H1 (cell line): ENCODE measurements at regions of chr6 and their contacts with region 1.

Region 1: DNA sequence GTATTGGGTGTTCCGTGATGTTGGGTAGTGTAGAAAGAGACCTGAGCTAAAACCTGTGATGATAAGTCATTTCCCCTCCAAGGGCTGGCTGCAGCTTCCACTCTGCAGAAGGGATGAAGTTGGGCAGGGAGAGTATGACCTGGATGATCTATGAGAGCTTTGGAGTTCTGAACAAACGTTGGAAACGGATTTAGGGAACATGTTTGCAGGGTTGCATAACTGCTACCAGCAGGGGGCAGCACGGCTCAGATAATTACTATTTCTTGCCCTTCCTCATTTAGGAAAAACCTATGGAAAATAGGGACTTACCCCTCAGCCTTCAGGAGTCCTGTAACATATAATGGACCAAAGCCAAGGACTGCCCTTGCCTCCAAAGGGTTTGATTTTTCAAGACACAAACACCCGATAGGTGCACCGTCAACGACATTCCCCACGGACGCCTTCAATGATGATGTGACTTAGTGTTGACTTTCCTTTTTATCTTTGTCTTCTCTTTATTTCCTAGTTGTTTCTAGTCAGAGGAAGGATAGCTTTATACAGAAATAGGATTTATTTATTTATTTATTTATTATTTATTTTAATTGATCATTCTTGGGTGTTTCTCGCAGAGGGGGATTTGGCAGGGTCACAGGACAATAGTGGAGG is 164.9 kb upstream of the SASH1 start:
- DNase-seq: peak; percentile 50 to 89
- H3K4me3 ChIP-seq: no peak overlapping the region
- H3K27ac ChIP-seq: no peak overlapping the region
- H3K4me1 ChIP-seq: peaks cover 0 to 5% (median 2%) of the 10 kb centered on the region in 4 experiments; a peak in 3 of 7 replicates
- H3K27me3 ChIP-seq: no peaks in the 10 kb centered on the region
- CTCF ChIP-seq: peak; percentile 39 to 87 (median 71)
- EP300 ChIP-seq: no peak
- POLR2A ChIP-seq: no peak
- RAD21 ChIP-seq: peak; percentile 80 to 81

Region 2: GRCh38 chr6:148166339-148166968 is 11.3 kb before region 1 on chr6:
- CTCF ChIA-PET with region 1: interaction called, 20 read pairs
- POLR2A ChIA-PET with region 1: no interaction called
- DNase-seq: no peak
- H3K4me3 ChIP-seq: no peak overlapping the region
- H3K27ac ChIP-seq: no peak overlapping the region
- H3K4me1 ChIP-seq: no peaks in the 10 kb centered on the region; a peak in 1 of 7 replicates
- H3K27me3 ChIP-seq: no peaks in the 10 kb centered on the region
- CTCF ChIP-seq: peak in 2 of 3 experiments; percentile 40 to 56; a peak in 2 of 4 replicates
- EP300 ChIP-seq: no peak
- POLR2A ChIP-seq: no peak
- RAD21 ChIP-seq: peak; percentile 78 to 81

Region 3: DNA sequence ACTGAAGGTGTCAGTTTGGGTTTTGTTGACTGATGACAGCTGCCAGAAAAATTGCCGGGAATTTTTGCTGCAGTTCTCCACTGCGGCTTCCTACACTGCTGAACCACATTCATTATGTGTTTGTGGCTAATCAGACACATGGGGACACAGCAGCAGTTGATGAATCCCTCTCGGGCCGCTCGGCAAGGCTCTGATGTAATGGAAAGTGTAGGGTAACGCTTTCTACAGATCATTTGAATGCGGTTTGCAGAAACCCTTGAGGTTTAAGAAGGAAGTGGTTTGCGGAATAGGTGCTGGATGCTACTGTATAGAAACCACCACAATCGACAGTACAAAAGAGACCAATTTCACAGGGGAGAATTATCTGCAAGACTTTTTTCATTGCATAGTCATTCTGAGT is 26.3 kb after region 1 on chr6:
- CTCF ChIA-PET with region 1: interaction called, 11 read pairs
- POLR2A ChIA-PET with region 1: no interaction called
- DNase-seq: no peak
- H3K4me3 ChIP-seq: no peak overlapping the region
- H3K27ac ChIP-seq: no peak overlapping the region
- H3K4me1 ChIP-seq: peaks cover 0 to 3% (median under 1%) of the 10 kb centered on the region in 4 experiments; a peak in 1 of 7 replicates
- H3K27me3 ChIP-seq: no peaks in the 10 kb centered on the region
- CTCF ChIP-seq: no peak
- EP300 ChIP-seq: no peak
- POLR2A ChIP-seq: no peak
- RAD21 ChIP-seq: no peak

Region 4: DNA sequence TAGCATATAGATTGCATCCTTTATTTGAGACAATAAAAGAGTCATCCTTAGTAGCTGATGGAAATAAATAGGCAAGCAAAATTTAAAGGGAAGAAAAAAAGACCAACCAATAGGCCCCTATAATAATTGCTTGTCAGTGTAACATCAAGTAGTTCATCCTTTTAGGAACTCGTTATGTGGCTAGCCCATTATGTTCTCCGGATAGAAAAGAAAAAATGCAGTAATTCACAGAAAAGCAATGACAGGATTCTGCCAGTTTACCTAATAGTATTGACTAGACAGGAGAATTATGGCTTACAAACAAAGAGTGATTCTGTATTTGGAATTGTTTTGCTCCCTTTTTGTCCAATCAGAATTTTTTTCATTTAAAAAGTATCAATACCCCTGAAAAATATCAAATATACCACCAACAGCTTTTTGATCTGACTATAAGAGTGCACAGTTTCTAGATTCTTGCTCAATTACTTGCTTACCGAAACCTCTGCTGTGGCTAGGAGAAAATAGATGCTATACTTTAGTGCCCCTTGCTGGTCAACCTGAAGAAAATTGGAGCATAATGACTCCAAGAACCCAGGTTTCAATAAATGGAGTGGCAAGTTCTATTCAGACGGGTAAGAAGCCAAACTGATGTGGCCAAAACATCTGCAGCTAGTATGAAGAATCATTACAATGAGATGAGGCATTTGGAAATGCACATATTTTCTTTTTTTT is 73.4 kb after region 1 on chr6:
- CTCF ChIA-PET with region 1: interaction called, 25 read pairs
- POLR2A ChIA-PET with region 1: no interaction called
- DNase-seq: no peak
- H3K4me3 ChIP-seq: no peak overlapping the region
- H3K27ac ChIP-seq: no peak overlapping the region
- H3K4me1 ChIP-seq: no peaks in the 10 kb centered on the region
- H3K27me3 ChIP-seq: no peaks in the 10 kb centered on the region
- CTCF ChIP-seq: peak in 2 of 3 experiments; percentile 42 to 48; a peak in 3 of 4 replicates
- EP300 ChIP-seq: no peak
- POLR2A ChIP-seq: no peak
- RAD21 ChIP-seq: peak; percentile 68 to 79

Region 5: GRCh38 chr6:148349466-148349865 is 171.8 kb after region 1 on chr6:
- CTCF ChIA-PET with region 1: no interaction called
- POLR2A ChIA-PET with region 1: no interaction called
- DNase-seq: no peak
- H3K4me3 ChIP-seq: no peak overlapping the region
- H3K27ac ChIP-seq: no peak overlapping the region
- H3K4me1 ChIP-seq: peaks cover 6 to 33% (median 22%) of the 10 kb centered on the region in 4 experiments
- H3K27me3 ChIP-seq: no peaks in the 10 kb centered on the region
- CTCF ChIP-seq: no peak
- EP300 ChIP-seq: no peak
- POLR2A ChIP-seq: no peak
- RAD21 ChIP-seq: no peak

Region 6: DNA sequence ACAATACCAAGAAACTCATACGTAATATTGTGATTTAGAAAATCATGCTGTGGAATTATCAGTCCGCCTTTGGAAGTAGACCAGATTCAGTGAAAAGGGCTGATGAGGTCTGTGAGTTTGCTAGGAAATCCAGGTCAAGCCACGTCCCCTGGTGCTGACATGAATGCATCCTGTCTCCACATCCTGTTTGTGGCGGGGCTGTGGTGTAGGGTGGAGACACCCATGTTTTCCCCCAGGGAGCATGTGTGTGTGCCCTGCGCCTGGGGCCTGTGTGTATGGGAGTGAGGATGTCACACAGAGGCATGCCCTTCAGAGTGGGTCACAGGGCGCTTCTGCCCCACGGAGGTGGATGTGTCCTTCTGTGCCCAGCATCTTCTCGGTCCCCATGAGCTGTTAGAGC is 274.0 kb after region 1 on chr6:
- CTCF ChIA-PET with region 1: interaction called, 12 read pairs
- POLR2A ChIA-PET with region 1: no interaction called
- DNase-seq: no peak
- H3K4me3 ChIP-seq: no peak overlapping the region
- H3K27ac ChIP-seq: no peak overlapping the region
- H3K4me1 ChIP-seq: peaks cover 0 to 2% (median under 1%) of the 10 kb centered on the region in 4 experiments; a peak in 6 of 7 replicates
- H3K27me3 ChIP-seq: no peaks in the 10 kb centered on the region
- CTCF ChIP-seq: no peak
- EP300 ChIP-seq: no peak
- POLR2A ChIP-seq: no peak
- RAD21 ChIP-seq: no peak

Region 7: GRCh38 chr6:148528292-148528691 is 350.6 kb after region 1 on chr6:
- CTCF ChIA-PET with region 1: interaction called, 14 read pairs
- POLR2A ChIA-PET with region 1: no interaction called
- DNase-seq: no peak
- H3K4me3 ChIP-seq: no peak overlapping the region
- H3K27ac ChIP-seq: no peak overlapping the region
- H3K4me1 ChIP-seq: peaks cover 0 to 13% (median 5%) of the 10 kb centered on the region in 4 experiments; a peak in 6 of 7 replicates
- H3K27me3 ChIP-seq: no peaks in the 10 kb centered on the region
- CTCF ChIP-seq: peak; percentile 6 to 31 (median 24); a peak in 3 of 4 replicates
- EP300 ChIP-seq: no peak
- POLR2A ChIP-seq: no peak
- RAD21 ChIP-seq: peak; percentile 49 to 64